Activated CD8-positive, alpha-beta T cell treated with anti-CD3 and anti-CD28 coated beads, Interleukin-2, amount 10 ng/mL, durations not matched to agents 7 days and 5 days (primary cell): ENCODE measurements at regions of chr16 and their contacts with region 1.

Region 1: DNA sequence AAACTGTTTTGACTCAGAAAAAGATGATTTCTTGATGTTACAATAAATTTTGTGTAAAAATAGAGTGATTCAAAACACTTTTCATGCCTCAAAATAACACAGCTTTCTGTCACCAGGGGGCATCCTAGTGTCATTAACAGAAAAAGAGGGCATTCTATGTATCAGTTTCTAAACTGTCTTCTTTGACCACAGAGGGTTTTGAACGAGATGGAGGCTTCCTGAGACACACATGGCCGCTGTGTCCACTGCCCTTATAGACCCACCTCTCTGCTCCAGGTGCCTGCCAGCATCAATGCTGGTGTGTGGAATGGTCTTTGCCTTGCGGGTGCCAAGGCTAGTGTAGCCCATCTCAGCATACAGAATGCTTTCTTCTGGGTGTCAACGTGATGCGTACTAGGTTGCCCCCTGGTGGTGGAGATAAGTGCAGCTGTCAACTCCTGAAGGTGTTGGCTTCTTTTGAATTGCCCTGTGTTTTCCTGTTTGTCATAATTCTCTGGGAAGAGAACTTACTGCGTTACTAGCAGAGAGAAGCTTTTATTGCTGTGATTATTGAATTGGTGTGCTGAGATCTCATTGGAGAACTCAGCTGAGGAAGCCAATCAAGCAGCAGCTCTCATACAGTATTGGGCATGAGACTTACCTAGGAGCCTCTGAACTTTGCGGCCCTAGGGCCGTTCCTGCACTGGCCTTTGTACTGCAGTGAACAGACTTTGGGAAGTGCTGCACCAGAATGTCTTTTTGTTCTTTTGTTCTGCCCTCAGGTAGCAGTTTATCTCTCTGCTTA is 38.6 kb downstream of the USP10 start:
- DNase-seq: peak; percentile 86
- ATAC-seq: peak; percentile 86
- H3K4me3 Mint-ChIP-seq: no peak overlapping the region
- H3K27ac Mint-ChIP-seq: no peak overlapping the region
- H3K4me1 Mint-ChIP-seq: peaks cover 59% of the 10 kb centered on the region
- H3K27me3 Mint-ChIP-seq: no peaks in the 10 kb centered on the region

Region 2: DNA sequence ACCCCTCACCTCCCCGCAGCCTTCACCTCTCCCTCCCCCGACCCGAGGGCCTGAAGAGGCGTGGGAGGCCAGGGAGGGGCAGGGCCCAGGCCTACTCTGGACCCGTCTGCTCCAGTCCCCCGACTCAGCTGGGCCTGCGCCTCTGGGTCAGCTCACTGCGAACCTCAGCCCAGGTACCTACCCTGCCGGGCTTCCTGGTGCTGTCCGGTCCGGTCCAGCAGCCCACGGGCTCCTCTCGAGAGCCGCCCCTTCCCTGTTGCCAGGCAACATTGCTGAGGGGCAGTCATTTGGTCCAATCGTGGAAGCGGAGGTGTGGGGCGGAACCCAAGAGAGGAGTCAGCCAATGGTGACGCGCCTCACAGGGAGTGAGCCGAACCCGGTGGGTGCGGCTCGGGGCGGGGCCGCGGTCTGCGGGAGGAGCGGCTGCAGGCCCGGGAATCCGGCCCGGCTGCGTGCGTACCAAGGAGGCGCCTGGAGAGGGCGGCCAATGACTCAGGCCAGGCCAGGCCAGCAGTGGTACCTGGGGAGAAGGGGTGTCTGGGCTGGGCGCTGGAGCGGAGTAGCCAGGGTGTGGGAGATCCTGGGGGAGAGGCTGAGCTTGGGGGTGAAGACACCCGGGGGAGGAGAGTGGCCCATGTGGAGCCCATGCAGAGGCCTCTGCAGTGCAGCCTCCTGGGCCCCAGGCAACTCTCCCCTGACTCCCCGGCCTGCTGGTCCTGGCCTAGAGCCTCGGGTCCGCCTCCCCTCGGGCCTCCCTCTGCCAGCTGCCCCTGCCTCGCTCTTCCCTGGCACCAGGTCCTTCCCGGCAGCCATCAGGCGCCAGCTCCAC is 233.8 kb before region 1 on chr16 and contains the start of gene MEAK7:
- CTCF ChIA-PET with region 1: interaction called, 24 read pairs
- POLR2A ChIA-PET with region 1: no interaction called
- DNase-seq: peak; percentile 98
- ATAC-seq: peak; percentile 94
- H3K4me3 Mint-ChIP-seq: peak within 1 kb of the TSS; percentile 82
- H3K27ac Mint-ChIP-seq: peak within 1 kb of the TSS; percentile 86
- H3K4me1 Mint-ChIP-seq: peaks cover 56% of the 10 kb centered on the region
- H3K27me3 Mint-ChIP-seq: no peaks in the 10 kb centered on the region
- total RNA-seq, gene MEAK7: 62.3 to 72.4 TPM

Region 3: GRCh38 chr16:84617791-84618580 is 120.5 kb before region 1 on chr16 and contains the start of gene COTL1:
- CTCF ChIA-PET with region 1: interaction called, 81 read pairs
- POLR2A ChIA-PET with region 1: no interaction called
- DNase-seq: peak; percentile 97
- ATAC-seq: peak; percentile 85
- H3K4me3 Mint-ChIP-seq: peak within 1 kb of the TSS; percentile 98
- H3K27ac Mint-ChIP-seq: peak within 1 kb of the TSS; percentile 88
- H3K4me1 Mint-ChIP-seq: peaks cover 58% of the 10 kb centered on the region
- H3K27me3 Mint-ChIP-seq: peaks cover 6% of the 10 kb centered on the region
- total RNA-seq, gene COTL1: 837 to 887 TPM

Region 4: DNA sequence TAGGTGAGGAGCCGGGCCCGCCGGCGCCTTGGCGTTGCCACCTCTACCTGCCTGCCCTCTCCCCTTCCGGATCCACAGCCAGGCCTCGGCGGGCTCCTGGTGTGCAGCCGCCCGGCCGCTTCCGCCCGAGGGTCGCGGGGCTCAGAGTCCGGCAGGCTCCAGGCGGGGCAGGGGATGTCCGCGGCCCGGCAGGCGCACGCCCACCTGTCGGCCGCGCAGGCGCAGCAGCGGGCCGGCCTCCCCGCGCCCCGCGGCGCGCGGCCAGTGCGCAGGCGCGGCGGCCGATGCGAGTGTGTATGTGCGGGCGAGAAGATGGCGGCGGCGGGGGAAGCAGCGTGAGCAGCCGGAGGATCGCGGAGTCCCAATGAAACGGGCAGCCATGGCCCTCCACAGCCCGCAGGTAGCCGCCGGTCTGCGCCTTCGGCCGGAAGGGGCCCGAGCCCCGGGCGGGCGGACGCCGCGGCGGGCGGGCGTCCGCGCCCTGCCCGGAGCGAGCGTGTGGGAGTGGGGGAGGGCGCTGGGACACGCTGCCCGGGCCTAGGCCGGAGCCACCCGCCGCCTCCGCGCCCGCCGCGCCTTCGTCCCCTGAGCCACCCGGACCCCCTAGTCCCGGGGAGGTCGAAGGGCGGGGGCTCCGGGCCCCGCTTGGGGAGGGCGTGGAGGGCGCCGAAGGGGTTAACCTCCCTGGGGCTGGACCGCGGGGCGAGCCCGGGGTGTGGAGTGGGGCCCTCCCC is 38.6 kb before region 1 on chr16 and contains the start of gene USP10:
- CTCF ChIA-PET with region 1: interaction called, 15 read pairs
- POLR2A ChIA-PET with region 1: no interaction called
- DNase-seq: peak; percentile 86
- ATAC-seq: peak; percentile 89
- H3K4me3 Mint-ChIP-seq: peak within 1 kb of the TSS; percentile 98
- H3K27ac Mint-ChIP-seq: peak within 1 kb of the TSS; percentile 93
- H3K4me1 Mint-ChIP-seq: peaks cover 38% of the 10 kb centered on the region
- H3K27me3 Mint-ChIP-seq: no peaks in the 10 kb centered on the region
- total RNA-seq, gene USP10: 82.9 to 88.3 TPM

Region 5: DNA sequence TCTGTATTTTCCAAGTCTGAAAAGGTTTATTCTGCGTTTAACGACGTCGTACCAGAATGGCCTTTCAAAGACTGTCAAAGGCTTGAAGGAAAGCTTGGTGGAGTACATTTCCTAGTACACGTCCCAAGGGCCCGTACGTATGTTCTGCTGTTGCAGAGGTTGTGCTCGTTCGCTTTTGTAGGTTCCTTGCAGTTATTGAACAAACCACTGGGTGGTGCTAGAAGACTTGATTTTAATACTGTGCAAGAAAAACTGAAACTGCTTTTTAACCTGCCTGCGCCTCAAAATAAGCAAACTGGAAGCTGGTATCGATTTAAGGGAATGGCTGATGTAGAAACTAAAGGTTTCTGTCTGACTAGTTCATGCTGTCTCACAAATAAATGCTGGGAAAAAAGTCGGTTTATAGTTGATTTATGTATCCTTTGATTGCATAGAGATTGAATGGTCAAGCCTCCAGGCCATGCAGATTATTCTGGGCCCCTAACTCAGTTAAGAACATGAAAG is 16.0 kb after region 1 on chr16:
- CTCF ChIA-PET with region 1: interaction called, 190 read pairs
- POLR2A ChIA-PET with region 1: no interaction called
- DNase-seq: peak; percentile 87
- ATAC-seq: peak; percentile 86
- H3K4me3 Mint-ChIP-seq: peak overlapping the region; percentile 41
- H3K27ac Mint-ChIP-seq: no peak overlapping the region
- H3K4me1 Mint-ChIP-seq: peaks cover 62% of the 10 kb centered on the region
- H3K27me3 Mint-ChIP-seq: no peaks in the 10 kb centered on the region

Region 6: DNA sequence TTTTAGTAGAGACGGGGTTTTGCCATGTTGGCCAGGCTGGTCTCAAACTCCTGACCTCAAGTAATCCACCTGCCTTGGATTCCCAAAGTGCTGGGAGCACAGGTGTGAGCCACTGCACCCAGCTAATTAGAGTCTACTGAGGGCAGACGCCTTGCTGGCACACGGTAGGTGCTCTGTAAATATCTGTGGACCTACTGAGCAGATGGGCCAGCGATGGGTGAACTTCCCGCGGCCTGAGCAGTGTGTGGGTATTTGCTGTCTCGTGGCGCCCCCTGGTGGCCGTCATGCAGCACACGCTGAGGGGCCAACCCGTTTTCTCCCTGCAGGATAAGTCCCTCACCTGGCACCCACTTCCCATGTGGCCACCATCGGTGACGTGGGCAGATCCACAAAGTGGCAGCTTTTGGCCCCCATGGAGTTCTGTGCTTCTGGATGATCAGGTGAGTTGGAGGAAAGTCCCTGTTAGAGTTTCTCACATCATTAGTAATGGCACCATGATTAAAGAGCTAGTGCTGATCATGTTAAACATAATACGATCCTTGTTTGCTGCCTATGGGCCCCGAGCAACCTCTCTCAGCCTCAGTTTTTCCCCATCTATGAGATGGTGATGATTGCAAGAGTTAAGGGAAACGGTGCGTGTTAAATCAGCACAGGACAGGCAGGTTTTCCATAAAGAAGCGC is 232.1 kb after region 1 on chr16:
- CTCF ChIA-PET with region 1: interaction called, 36 read pairs
- POLR2A ChIA-PET with region 1: no interaction called
- DNase-seq: peak; percentile 84
- ATAC-seq: peak; percentile 98
- H3K4me3 Mint-ChIP-seq: no peak overlapping the region
- H3K27ac Mint-ChIP-seq: no peak overlapping the region
- H3K4me1 Mint-ChIP-seq: peaks cover 5% of the 10 kb centered on the region
- H3K27me3 Mint-ChIP-seq: peaks cover 2% of the 10 kb centered on the region